Activated CD8-positive, alpha-beta T cell treated with anti-CD3 and anti-CD28 coated beads for 36 hours (primary cell): ENCODE measurements at regions of chr9 and their contacts with region 1.

Region 1: GRCh38 chr9:37746848-37747753 is 6.5 kb upstream of the TRMT10B start:
- DNase-seq: peak; percentile 75
- ATAC-seq: peak; percentile 99
- H3K4me3 Mint-ChIP-seq: no peak overlapping the region
- H3K27ac Mint-ChIP-seq: no peak overlapping the region
- H3K4me1 Mint-ChIP-seq: no peaks in the 10 kb centered on the region
- H3K27me3 Mint-ChIP-seq: no peaks in the 10 kb centered on the region
- CTCF ChIP-seq: peak; percentile 82

Region 2: DNA sequence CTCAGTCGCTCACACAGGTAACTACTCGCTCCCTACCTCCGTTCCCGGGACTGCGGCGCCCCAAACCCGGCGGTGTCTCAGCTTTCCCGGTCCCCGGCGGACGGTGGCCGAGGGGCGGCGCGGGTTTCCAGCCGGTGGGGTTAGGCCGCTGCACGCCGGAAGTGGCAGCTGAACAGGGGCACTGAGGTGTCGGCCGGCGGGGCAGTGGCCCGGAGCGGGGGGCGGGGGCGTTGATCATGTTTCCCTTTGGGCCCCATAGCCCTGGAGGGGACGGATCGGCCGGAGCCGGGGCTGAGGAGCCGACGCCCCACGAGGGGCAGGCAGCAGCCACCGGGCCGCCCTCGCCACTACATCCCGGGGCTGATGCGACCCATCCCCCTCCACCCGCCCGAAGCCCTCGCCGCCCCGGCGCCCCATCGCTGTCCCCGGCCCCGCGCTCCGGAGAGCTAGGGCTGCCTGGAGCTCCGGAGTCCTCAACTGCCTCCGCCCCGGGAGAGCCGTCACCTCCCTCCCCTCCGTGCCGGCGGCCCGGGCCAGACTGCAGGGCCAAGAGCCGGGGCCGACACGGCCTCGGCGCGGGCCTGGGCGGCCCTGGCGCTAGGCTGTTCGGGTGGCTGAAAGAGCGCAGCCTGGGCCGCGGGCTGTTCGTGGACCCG is 53.7 kb after region 1 on chr9 and contains the start of gene DCAF10:
- CTCF ChIA-PET with region 1: no interaction called
- POLR2A ChIA-PET with region 1: no interaction called
- intact Hi-C with region 1: loop called (anchors 5 kb)
- DNase-seq: peak; percentile 88
- ATAC-seq: peak; percentile 89
- H3K4me3 Mint-ChIP-seq: peak within 1 kb of the TSS; percentile 93
- H3K27ac Mint-ChIP-seq: peak within 1 kb of the TSS; percentile 89
- H3K4me1 Mint-ChIP-seq: peaks cover 36% of the 10 kb centered on the region
- H3K27me3 Mint-ChIP-seq: no peaks in the 10 kb centered on the region
- CTCF ChIP-seq: no peak
- total RNA-seq, gene DCAF10: 14.7 to 15.2 TPM

Region 3: DNA sequence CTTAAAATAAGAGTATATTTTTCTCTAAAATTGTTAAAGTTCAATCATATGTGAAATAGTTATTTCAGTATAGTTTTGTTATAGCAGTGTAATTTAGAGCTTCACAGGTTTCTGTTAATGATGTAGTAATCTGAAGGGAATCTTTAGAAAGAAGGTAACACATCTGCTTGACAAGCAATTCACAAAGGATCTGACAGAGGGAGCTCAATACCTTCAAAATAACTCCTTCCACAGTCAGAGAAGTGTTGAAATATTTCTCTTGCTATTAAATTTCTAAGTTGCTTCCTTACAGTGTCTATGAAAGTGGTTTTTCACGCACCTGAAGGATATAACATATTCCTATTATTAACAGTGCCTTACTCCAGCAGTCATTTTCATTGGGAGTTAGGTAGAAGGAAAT is 111.9 kb after region 1 on chr9:
- CTCF ChIA-PET with region 1: no interaction called
- POLR2A ChIA-PET with region 1: no interaction called
- intact Hi-C with region 1: loop called (anchors 10 kb)
- DNase-seq: no peak
- ATAC-seq: no peak
- H3K4me3 Mint-ChIP-seq: no peak overlapping the region
- H3K27ac Mint-ChIP-seq: no peak overlapping the region
- H3K4me1 Mint-ChIP-seq: no peaks in the 10 kb centered on the region
- H3K27me3 Mint-ChIP-seq: no peaks in the 10 kb centered on the region
- CTCF ChIP-seq: no peak